H1 (cell line): ENCODE measurements at regions of chr15 and their contacts with region 1.

Region 1: GRCh38 chr15:77738441-77739302 is 106.0 kb upstream of the LINGO1 start:
- DNase-seq: peak in 1 of 2 experiments; percentile 67
- H3K4me3 ChIP-seq: peak overlapping the region in 1 of 4 experiments; percentile 38; a peak in 3 of 8 replicates
- H3K27ac ChIP-seq: no peak overlapping the region
- H3K4me1 ChIP-seq: peaks cover 11 to 36% (median 22%) of the 10 kb centered on the region in 4 experiments
- H3K27me3 ChIP-seq: no peaks in the 10 kb centered on the region; a peak in 1 of 7 replicates
- CTCF ChIP-seq: no peak
- EP300 ChIP-seq: no peak
- POLR2A ChIP-seq: no peak
- RAD21 ChIP-seq: no peak

Region 2: DNA sequence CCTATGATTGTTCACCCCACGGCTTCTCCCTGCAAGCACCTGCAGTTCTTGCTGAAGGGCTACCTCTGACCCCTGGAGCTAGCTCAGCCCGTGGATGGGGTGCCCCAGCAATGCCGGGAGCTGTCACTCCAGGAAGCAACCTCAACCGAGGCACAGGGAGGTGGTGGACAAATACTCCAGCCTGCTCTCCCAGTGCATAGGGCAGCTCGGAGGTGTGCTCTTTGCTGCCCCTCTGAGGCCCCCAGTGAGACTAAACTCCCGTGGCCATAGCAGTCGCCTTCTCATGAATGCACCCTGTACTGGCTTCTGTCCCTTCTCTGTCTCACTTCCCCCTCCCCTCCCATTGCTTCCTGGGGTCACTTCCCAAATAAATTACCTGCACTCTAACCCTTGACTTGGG is 154.5 kb before region 1 on chr15:
- CTCF ChIA-PET with region 1: no interaction called
- POLR2A ChIA-PET with region 1: no interaction called
- DNase-seq: no peak
- H3K4me3 ChIP-seq: no peak overlapping the region
- H3K27ac ChIP-seq: no peak overlapping the region
- H3K4me1 ChIP-seq: no peaks in the 10 kb centered on the region; a peak in 2 of 7 replicates
- H3K27me3 ChIP-seq: no peaks in the 10 kb centered on the region; a peak in 1 of 7 replicates
- CTCF ChIP-seq: peak; percentile 61 to 73 (median 69)
- EP300 ChIP-seq: no peak
- POLR2A ChIP-seq: no peak
- RAD21 ChIP-seq: peak; percentile 58 to 66

Region 3: GRCh38 chr15:77650265-77650664 is 88.4 kb before region 1 on chr15:
- CTCF ChIA-PET with region 1: interaction called, 39 read pairs
- POLR2A ChIA-PET with region 1: no interaction called
- DNase-seq: peak in 1 of 2 experiments; percentile 85
- H3K4me3 ChIP-seq: no peak overlapping the region
- H3K27ac ChIP-seq: no peak overlapping the region
- H3K4me1 ChIP-seq: peaks cover 0 to 13% (median under 1%) of the 10 kb centered on the region in 4 experiments; a peak in 5 of 7 replicates
- H3K27me3 ChIP-seq: no peaks in the 10 kb centered on the region
- CTCF ChIP-seq: peak; percentile 72 to 81 (median 78)
- EP300 ChIP-seq: no peak
- POLR2A ChIP-seq: no peak
- RAD21 ChIP-seq: peak; percentile 72 to 74

Region 4: GRCh38 chr15:77722759-77723460 is 15.8 kb before region 1 on chr15:
- CTCF ChIA-PET with region 1: interaction called, 16 read pairs
- POLR2A ChIA-PET with region 1: interaction called, 3 read pairs
- DNase-seq: peak in 1 of 2 experiments; percentile 29
- H3K4me3 ChIP-seq: no peak overlapping the region
- H3K27ac ChIP-seq: no peak overlapping the region
- H3K4me1 ChIP-seq: peaks cover 0 to 2% (median under 1%) of the 10 kb centered on the region in 4 experiments; a peak in 1 of 7 replicates
- H3K27me3 ChIP-seq: no peaks in the 10 kb centered on the region
- CTCF ChIP-seq: peak; percentile 31 to 46 (median 46)
- EP300 ChIP-seq: no peak
- POLR2A ChIP-seq: no peak
- RAD21 ChIP-seq: peak in 1 of 2 experiments; percentile 20; a peak in 2 of 4 replicates